Astrocyte of the cerebellum (primary cell): ENCODE measurements at regions of chr3 and their contacts with region 1.

Region 1: GRCh38 chr3:30720586-30721313 is 114.3 kb downstream of the TGFBR2 start:
- DNase-seq: peak; percentile 23
- H3K4me3 ChIP-seq: no peak overlapping the region
- CTCF ChIP-seq: no peak

Region 2: GRCh38 chr3:30042274-30042859 is 678.4 kb before region 1 on chr3:
- in situ Hi-C with region 1: loop called (anchors 25 kb)
- DNase-seq: peak; percentile 79
- H3K4me3 ChIP-seq: no peak overlapping the region
- CTCF ChIP-seq: peak; percentile 73